ENCODE measurements at regions of chr1 and their contacts with region 1.

Region 1: DNA sequence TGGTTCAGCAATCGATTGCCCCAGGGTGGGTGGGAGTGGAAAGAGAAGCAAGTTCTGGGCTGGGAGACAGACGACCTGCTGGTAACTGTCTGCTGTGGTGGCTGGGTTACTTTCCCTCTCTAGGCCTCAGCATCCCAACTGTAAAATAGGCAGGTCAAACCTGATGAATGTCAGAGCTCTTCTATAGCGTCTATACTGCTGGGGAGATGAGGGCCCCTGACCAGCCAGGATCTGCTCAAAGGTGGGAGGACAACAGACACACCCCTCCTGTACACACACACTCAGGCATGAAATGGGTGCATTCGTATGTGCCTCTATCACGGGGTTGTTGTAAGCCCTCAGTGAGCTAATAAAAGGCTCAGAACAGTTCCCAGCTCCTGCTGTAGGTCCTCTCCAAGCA is 12.7 kb upstream of the EPHB2 start:
- DNase-seq: no peak
- H3K4me3 ChIP-seq: no peak overlapping the region
- H3K27ac ChIP-seq: no peak overlapping the region
- H3K4me1 ChIP-seq: no peaks in the 10 kb centered on the region
- H3K27me3 ChIP-seq: no peaks in the 10 kb centered on the region
- CTCF ChIP-seq: no peak
- POLR2A ChIP-seq: no peak

Region 2: GRCh38 chr1:22654692-22655091 is 43.3 kb before region 1 on chr1:
- intact Hi-C with region 1: no loop called
- DNase-seq: no peak
- H3K4me3 ChIP-seq: peak overlapping the region; percentile 25 to 40 (median 27)
- H3K27ac ChIP-seq: no peak overlapping the region
- H3K4me1 ChIP-seq: no peaks in the 10 kb centered on the region
- H3K27me3 ChIP-seq: peaks cover 0 to 3% of the 10 kb centered on the region in 2 donors
- CTCF ChIP-seq: no peak
- POLR2A ChIP-seq: no peak

Region 3: GRCh38 chr1:22733643-22734042 is 35.7 kb after region 1 on chr1:
- intact Hi-C with region 1: loop called (anchors 2 kb)
- DNase-seq: no peak
- H3K4me3 ChIP-seq: no peak overlapping the region
- H3K27ac ChIP-seq: no peak overlapping the region
- H3K4me1 ChIP-seq: no peaks in the 10 kb centered on the region
- H3K27me3 ChIP-seq: no peaks in the 10 kb centered on the region
- CTCF ChIP-seq: no peak
- POLR2A ChIP-seq: no peak

Region 4: DNA sequence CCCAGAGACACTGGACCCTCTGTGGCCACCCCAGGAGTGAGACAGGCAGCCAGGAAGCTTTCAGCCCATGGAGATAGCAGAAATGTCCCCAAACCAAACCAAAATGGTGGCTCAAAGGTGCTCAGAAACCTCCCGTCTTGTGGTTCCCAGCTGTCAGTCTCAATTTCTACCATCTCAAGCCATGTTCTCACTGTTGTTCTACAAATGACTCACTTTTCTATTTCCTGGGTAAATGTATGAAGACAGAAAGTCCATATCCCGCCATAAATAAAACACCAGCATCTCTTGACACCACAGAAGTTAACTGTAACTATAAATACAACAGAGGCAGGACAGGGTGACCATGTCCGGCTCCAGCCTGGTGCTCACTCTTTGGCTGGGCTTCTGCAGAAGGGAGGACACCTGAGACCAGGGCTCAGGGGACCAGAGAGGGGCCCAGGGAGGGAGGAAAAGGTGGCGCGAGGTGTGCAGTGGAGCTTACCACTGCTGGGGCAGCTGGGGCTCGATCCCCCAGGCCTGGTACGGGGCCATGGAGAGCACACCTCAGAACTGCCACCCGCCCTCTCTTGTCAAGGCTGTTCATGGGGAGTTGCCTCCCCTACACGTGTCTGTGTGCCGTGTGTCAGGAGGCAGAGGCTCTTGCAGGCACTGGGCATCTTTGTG is 56.3 kb after region 1 on chr1:
- intact Hi-C with region 1: no loop called
- DNase-seq: no peak
- H3K4me3 ChIP-seq: no peak overlapping the region
- H3K27ac ChIP-seq: peak overlapping the region in 1 of 2 donors; percentile 55
- H3K4me1 ChIP-seq: no peaks in the 10 kb centered on the region
- H3K27me3 ChIP-seq: no peaks in the 10 kb centered on the region
- CTCF ChIP-seq: no peak
- POLR2A ChIP-seq: no peak

Region 5: DNA sequence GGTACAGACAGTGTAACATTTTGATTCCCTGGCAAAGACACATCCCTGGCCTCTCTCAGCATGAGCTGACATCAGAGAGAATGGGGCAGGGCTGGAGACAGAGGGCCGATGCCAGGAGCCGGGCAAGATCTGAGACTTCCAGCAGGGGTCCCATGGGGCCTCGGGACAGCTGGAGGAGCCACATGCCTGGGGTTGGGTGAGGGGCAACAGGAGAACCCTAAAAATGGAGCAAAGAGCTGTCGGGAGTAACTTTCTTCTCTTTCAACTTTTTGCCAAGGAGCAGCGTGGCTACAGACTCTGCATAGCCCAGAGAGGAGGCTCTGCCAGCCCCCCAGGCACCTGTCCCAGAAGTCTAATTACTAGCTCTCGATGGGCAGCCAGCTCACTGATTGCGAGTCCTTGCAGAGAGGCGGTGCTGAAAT is 143.9 kb after region 1 on chr1:
- intact Hi-C with region 1: no loop called
- DNase-seq: no peak
- H3K4me3 ChIP-seq: no peak overlapping the region
- H3K27ac ChIP-seq: no peak overlapping the region
- H3K4me1 ChIP-seq: no peaks in the 10 kb centered on the region
- H3K27me3 ChIP-seq: no peaks in the 10 kb centered on the region
- CTCF ChIP-seq: no peak
- POLR2A ChIP-seq: no peak